ENCODE measurements at regions of chr11 and their contacts with region 1.

Region 1: DNA sequence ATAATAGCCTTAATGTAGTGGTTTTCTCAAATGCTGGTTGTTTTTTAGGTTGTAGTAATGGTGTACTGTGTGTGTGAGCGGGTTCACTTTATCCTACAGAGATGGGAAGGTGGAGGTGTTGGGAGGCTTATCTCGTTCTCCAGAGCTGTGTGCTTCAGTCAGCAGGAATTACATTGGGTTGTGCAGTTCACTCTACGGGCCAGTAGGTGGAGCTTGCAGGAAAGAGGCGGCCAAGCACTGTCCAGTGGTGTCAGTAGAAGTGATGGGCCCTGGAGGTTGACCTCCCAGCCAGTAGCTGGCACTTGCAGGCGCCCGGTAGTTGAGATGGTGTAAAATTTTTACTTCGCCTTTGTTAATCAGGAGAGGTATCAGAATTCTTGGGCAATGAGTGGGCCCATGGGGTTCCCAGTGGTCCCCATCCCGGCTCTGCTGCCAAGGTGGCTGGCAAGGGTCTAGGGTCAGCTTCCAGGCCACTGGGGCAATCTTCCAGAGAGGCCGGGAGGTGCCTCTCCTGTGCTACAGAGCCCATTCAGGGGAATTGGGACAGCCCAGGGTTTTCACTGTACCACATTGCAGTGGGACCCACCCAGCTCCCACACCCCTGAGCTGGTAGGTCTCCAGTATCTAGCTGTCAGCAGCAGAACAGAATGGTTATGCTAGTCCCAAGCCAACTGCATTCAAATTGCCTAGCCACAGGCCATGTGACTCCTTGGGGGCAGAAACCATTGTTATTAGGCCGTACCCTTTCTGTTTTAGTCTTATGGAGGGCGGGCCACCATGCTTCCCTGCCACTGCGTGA is 43.9 kb downstream of the BIRC2 start:
- DNase-seq: peak; percentile 72 to 73
- H3K4me3 ChIP-seq: no peak overlapping the region
- H3K27ac ChIP-seq: peak overlapping the region in 1 of 3 donors; percentile 16
- H3K4me1 ChIP-seq: peaks cover 4 to 5% of the 10 kb centered on the region in 2 donors
- H3K27me3 ChIP-seq: no peaks in the 10 kb centered on the region
- CTCF ChIP-seq: peak; percentile 75 to 88 (median 86)
- POLR2A ChIP-seq: no peak

Region 2: GRCh38 chr11:102346748-102347461 is 44.0 kb before region 1 on chr11 and contains the start of gene BIRC2:
- intact Hi-C with region 1: loop called (anchors 10 kb)
- DNase-seq: peak; percentile 93 to 96
- H3K4me3 ChIP-seq: peak within 1 kb of the TSS; percentile 21 to 76 (median 64)
- H3K27ac ChIP-seq: peak within 1 kb of the TSS; percentile 99
- H3K4me1 ChIP-seq: peaks cover 12 to 20% of the 10 kb centered on the region in 2 donors
- H3K27me3 ChIP-seq: no peaks in the 10 kb centered on the region
- CTCF ChIP-seq: peak; percentile 14 to 94 (median 75)
- POLR2A ChIP-seq: peak; percentile 6 to 96
- total RNA-seq, gene BIRC2: 43.9 to 152 (median 72.9) TPM

Region 3: DNA sequence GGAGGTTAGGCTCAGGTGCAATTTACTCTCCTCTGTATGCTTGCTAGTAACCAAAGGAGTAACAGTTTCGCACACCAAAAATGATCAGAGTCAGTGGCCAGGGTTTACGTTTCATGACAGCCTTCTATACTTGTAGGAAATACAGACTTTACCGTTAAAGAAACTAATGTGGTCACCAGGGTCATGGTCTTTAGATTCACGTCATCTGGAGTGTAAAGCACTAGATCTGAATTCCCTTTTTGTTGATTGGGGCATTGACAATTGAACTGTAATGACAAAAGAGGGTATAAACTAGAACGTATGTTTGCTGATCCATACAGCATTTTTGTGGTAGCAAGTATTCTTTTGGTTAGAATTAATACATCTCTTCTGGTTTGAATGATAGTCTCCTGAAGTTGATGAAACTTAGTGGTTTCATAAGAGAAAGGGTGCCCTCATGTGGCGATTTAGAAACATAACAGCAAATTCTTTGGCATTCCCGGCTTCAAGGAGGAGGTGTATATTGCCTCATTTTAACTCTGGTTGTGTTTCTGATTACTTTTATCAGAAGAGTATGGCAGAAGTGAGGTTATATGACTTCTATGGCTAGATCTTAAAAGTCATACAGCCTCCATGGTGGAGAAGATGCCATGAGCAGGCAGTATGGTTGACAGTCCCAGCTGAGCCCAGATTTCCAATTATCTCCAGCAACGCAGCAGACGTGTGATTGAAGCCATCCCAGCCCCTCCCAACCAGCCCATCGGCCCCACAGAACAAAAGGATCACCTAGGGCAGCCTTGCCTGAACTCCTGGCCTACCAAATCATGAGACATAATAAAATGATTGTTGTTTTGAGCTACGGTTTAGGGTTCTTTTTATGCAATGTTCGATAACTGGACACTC is 104.5 kb after region 1 on chr11:
- intact Hi-C with region 1: loop called (anchors 5 kb)
- DNase-seq: peak in 1 of 2 donors; percentile 35
- H3K4me3 ChIP-seq: no peak overlapping the region
- H3K27ac ChIP-seq: no peak overlapping the region
- H3K4me1 ChIP-seq: peaks cover 0 to 5% of the 10 kb centered on the region in 2 donors
- H3K27me3 ChIP-seq: no peaks in the 10 kb centered on the region
- CTCF ChIP-seq: peak in 5 of 6 experiments; percentile 28 to 87 (median 75)
- POLR2A ChIP-seq: no peak